Posterior cingulate gyrus (tissue), 11 donors: ENCODE measurements at regions of chr12 and their contacts with region 1.

Region 1: DNA sequence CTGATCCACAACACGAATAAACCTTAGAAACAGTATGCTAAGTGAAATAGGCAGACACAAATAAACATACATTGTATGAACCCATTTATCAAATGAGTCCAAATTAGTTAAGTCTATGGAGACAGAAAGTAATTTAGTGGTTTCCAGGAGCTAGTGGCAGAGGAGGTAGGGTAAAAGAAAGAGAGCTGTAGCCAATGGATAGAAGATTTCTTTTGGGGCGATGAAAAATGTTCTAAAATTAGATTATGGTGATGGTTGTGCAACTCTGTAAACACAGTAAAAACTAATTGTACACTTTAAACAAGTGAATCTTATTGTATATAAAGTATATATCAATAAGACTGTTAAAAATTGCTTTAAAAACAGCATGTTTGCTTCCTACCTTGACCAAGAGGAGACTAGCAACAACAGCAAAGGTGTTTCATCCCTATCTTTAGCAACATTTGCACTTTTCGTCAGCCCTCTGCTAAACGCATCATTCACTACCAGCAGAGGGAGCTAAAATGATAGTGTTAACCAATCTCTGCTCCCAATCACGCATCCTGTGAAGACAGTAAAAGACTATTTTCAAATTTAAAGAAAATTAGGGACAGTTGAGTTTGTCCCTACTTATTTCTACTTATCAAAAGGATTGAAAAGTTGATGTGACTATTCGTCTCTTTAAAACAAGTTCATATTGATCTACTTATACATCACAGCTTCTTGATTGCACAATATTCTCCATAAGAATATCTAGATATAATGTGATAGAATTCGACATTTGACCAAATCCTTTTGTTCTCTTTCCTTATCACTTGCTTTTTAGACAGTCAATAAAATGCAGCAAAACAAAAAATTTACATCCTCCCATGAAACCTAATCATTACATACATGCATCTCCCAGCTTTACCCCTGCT is 24.0 kb upstream of the LGR5 start:
- DNase-seq: peak in 1 of 10 donors; percentile 21

Region 2: DNA sequence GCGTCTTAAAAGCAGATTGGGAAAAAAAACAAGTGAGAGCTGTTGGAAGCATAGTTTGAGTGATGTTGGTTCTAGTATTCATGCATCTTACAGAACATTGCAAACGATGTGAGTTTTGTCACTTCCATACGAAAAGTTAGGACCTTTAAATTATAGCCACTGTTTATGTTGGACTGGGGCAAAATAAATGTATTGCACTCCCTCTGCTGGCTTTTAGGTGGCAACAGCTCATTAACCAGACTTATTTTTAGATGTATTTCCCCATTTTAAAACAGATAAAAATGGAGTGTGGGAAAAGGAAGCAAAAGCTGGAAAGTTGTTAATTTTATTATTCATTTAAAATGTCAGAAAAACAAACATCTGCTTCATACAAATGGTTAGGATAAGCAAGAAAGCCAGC is 135.9 kb after region 1 on chr12:
- intact Hi-C with region 1: loop called (anchors 2 kb)
- DNase-seq: no peak

Region 3: DNA sequence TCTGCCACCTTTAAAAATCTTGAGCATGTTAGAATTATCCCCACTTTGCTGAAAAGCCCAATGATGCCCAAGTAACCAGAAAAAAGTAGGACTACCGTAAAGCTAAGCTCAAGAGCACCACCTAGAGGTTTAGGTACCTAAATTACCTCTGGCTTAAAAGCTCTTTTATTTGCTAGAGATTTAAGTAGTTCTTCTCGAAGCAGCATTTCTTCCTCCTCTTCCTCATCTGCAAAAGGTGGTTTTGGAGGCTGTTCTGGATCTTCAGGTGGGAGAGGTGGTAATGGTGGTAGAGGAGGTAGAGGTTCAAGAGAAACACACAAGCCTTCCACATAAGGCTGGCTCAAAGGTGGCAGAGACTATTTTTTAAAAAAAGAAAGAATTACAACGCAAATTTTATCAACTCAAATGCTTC is 221.1 kb after region 1 on chr12:
- intact Hi-C with region 1: loop called (anchors 5 kb)
- DNase-seq: no peak